Activated naive CD4-positive, alpha-beta T cell treated with anti-CD3 and anti-CD28 coated beads for 36 hours (primary cell): ENCODE measurements at regions of chr2 and their contacts with region 1.

Region 1: GRCh38 chr2:122451040-122451439 is 695.6 kb downstream of the TSN start:
- DNase-seq: no peak
- H3K4me3 Mint-ChIP-seq: no peak overlapping the region
- H3K27ac Mint-ChIP-seq: no peak overlapping the region
- H3K4me1 Mint-ChIP-seq: no peaks in the 10 kb centered on the region
- H3K27me3 Mint-ChIP-seq: peaks cover 3% of the 10 kb centered on the region

Region 2: DNA sequence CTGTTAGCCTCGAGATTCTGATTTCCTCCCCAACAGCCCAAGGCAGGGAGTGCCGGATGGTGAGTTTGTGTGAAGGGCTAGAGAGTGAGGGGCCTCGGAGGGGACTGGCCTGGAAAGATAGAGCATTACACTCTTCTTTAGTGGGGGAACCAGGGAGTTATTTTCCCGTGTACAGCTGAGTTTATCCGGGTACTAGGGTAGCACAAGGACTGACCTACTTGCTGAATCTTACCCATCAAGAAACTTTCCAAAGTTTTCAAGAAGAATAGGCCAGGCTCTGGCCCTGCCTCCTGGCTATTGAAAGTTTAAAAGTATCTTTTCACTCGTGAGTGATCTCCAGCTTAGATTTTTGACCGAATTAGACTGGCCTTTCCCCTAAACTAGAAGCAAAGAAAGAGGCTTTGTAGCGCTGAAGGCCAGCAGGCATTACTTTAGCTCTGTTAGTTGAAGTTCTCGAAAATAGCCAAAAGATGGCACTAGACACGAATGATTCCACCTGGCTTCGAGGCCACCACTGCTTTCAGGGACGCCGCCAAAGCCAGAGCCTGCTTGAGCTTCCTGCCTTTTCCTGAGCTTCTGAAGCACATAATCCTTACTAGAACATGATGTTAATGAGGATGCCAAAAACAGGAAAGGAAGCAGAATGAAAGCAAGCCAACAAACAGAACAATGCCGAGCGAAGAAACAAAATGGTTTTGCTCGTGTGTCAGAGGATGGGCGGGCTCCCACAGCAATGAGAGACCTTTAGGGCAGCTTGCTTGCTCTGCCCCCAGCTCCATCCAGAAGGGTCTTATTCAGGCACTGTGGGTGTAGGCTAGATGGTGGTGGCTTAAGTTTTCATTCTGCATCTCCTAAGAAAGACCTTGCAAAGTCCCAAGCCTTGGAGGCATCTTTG is 639.8 kb before region 1 on chr2:
- CTCF ChIA-PET with region 1: no interaction called
- intact Hi-C with region 1: loop called (anchors 5 kb)
- DNase-seq: peak; percentile 20
- H3K4me3 Mint-ChIP-seq: no peak overlapping the region
- H3K27ac Mint-ChIP-seq: no peak overlapping the region
- H3K4me1 Mint-ChIP-seq: no peaks in the 10 kb centered on the region
- H3K27me3 Mint-ChIP-seq: peaks cover 9% of the 10 kb centered on the region

Region 3: DNA sequence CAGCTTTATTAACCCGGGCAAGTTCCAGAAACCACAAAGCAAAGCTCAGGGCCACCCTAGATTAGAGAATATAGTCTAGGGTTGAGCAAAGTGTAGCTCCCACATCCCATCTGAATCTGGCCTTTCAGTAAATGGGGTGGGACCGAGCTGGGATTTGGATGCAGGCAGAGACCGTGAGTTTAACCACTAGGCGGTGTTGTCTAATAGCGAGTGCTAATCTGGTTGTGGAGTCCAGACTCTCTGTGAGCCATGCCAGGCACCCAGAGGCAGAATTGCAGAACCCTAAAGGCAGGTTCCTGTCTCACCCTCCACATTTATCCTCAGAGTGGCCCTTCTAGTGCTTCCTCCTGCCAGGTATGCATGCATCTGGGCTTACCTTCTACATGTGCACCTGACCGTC is 259.7 kb before region 1 on chr2:
- CTCF ChIA-PET with region 1: no interaction called
- intact Hi-C with region 1: loop called (anchors 10 kb)
- DNase-seq: peak; percentile 9
- H3K4me3 Mint-ChIP-seq: no peak overlapping the region
- H3K27ac Mint-ChIP-seq: no peak overlapping the region
- H3K4me1 Mint-ChIP-seq: no peaks in the 10 kb centered on the region
- H3K27me3 Mint-ChIP-seq: no peaks in the 10 kb centered on the region